ENCODE measurements at regions of chr3 and their contacts with region 1.

Region 1: GRCh38 chr3:66276705-66277274 is 56.0 kb downstream of the SLC25A26 start:
- DNase-seq: no peak
- H3K4me3 ChIP-seq: no peak overlapping the region
- H3K27ac ChIP-seq: no peak overlapping the region
- H3K4me1 ChIP-seq: peaks cover 0 to 25% (median 0%) of the 10 kb centered on the region in 6 donors
- H3K27me3 ChIP-seq: no peaks in the 10 kb centered on the region
- CTCF ChIP-seq: peak; percentile 48 to 79 (median 65)
- POLR2A ChIP-seq: no peak

Region 2: DNA sequence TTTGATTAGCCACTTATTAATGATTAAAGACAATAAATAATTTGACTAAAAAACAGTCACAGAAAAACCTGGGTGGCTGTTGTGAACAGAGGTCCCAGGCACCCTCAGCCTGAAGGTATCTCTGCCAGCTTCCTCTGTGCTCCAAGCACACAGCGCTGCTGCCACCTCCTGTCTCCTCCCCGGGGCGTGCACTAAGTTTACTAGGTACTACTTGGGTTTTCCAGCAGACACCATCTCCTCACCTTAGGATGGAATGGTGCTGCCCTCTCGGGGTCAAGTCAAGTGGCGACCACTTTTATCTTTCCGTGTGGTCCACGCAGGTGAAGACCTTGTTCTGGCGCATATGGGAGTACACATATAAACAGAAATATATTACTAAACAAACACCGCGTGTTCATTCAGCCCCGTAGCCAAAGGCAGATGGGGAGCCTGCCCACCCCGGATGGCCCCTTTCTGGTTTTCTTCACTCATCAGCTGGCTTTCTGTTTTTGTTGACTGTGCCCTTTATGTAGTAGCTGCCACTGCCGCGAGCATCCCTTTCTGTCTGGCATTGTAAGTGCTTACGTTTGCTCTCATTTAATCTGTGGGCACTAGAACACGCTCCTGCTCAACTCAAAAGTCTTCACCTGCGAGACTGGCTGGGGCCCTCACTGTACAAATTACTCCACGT is 96.0 kb after region 1 on chr3:
- intact Hi-C with region 1: loop called (anchors 10 kb)
- DNase-seq: no peak
- H3K4me3 ChIP-seq: no peak overlapping the region
- H3K27ac ChIP-seq: no peak overlapping the region
- H3K4me1 ChIP-seq: no peaks in the 10 kb centered on the region
- H3K27me3 ChIP-seq: no peaks in the 10 kb centered on the region
- CTCF ChIP-seq: peak in 3 of 11 experiments; percentile 13 to 24 (median 17)
- POLR2A ChIP-seq: no peak

Region 3: DNA sequence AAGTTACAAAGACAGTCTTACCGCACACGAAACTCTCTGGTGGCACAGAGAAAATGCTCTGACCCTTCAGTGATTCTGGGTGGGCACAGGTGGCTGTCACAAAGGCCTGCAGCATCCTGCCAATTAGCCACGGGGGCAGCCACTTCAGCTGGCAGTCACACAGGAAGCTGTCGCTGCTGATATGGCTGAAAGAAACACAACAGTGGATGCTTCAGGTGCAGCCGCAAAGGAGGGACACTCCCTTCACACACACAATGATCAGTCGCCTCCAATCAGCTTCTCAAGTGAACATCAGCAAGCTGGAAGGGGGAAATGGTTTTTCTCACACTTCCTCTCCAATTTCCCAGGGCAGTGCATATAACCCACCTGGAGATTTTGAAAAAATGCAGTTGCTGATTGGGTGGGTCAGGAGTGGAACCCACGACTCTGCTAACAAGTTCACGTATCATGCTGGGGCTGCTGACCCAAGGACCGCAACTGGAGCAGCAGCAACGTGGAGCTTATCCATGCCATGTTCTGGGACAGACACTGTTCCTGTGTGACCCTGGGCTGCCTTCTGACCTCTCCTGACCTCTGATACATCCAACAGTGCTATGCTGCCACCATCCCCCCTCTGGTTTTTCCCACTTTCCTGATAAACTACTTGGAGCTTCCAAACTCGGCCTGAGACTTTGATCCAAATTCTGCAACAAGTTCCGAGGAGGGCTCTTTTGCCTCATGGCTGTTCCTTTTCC is 117.4 kb after region 1 on chr3:
- intact Hi-C with region 1: loop called (anchors 10 kb)
- DNase-seq: peak; percentile 89
- H3K4me3 ChIP-seq: peak overlapping the region in 5 of 8 donors; percentile 15 to 57 (median 20)
- H3K27ac ChIP-seq: peak overlapping the region; percentile 24 to 81 (median 64)
- H3K4me1 ChIP-seq: peaks cover 4 to 48% (median 26%) of the 10 kb centered on the region in 6 donors
- H3K27me3 ChIP-seq: no peaks in the 10 kb centered on the region
- CTCF ChIP-seq: no peak
- POLR2A ChIP-seq: no peak

Region 4: GRCh38 chr3:66816090-66816761 is 539.4 kb after region 1 on chr3:
- intact Hi-C with region 1: loop called (anchors 5 kb)
- DNase-seq: no peak
- H3K4me3 ChIP-seq: no peak overlapping the region
- H3K27ac ChIP-seq: no peak overlapping the region
- H3K4me1 ChIP-seq: peaks cover 0 to 7% (median 0%) of the 10 kb centered on the region in 6 donors
- H3K27me3 ChIP-seq: no peaks in the 10 kb centered on the region
- CTCF ChIP-seq: peak in 10 of 11 experiments; percentile 7 to 56 (median 44)
- POLR2A ChIP-seq: no peak